CD4-positive, alpha-beta T cell (primary cell): ENCODE measurements at regions of chr1 and their contacts with region 1.

Region 1: DNA sequence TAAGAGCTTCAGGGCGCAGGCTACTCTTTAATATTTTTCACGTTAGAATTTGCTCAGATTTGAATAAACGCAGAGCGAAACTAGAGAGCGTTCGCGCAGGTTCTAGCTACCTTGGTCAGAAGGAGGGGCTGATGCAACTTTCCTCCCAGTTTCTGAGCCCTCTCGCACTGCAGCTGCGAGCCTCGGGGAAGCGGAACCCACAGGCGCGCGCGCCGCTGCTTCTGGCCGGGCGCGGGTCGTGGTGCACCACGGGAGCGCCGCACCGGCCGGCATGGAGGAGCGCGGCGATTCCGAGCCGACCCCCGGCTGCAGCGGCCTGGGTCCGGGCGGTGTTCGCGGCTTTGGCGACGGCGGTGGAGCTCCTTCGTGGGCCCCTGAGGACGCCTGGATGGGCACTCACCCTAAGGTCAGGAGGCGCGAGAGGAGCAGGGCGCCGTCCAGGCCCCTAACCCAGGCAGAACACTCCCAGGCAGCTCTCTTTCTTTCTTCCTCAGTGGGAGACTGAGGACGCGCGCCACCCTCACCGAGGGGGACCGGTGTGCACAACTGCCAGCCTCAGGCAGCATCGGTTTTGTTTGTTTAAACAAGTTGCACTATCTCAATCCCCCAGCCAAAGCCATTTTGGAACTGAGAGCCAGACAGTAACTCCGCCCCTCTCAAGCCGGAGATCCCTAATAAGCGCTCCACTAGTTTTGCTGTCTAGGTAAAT is at the start of gene TSEN15:
- DNase-seq: peak; percentile 50 to 87 (median 70)
- ATAC-seq: peak; percentile 96
- H3K4me3 ChIP-seq: peak within 1 kb of the TSS; percentile 87
- H3K4me3 Mint-ChIP-seq: peak within 1 kb of the TSS; percentile 98
- H3K27ac ChIP-seq: peak within 1 kb of the TSS; percentile 33 to 80
- H3K27ac Mint-ChIP-seq: peak within 1 kb of the TSS; percentile 92
- H3K4me1 ChIP-seq: peaks cover 15% of the 10 kb centered on the region
- H3K4me1 Mint-ChIP-seq: peaks cover 43% of the 10 kb centered on the region
- H3K27me3 ChIP-seq: no peaks in the 10 kb centered on the region
- H3K27me3 Mint-ChIP-seq: peaks cover 15% of the 10 kb centered on the region
- CTCF ChIP-seq: no peak
- total RNA-seq, gene TSEN15: 11.2 to 12.2 TPM

Region 2: GRCh38 chr1:183956559-183957188 is 95.0 kb before region 1 on chr1:
- CTCF ChIA-PET with region 1: no interaction called
- POLR2A ChIA-PET with region 1: interaction called, 24 read pairs
- intact Hi-C with region 1: loop called (anchors 2 to 5 kb)
- DNase-seq: peak in 13 of 14 experiments; percentile 9 to 91 (median 36)
- ATAC-seq: peak; percentile 100
- H3K4me3 ChIP-seq: no peak overlapping the region
- H3K4me3 Mint-ChIP-seq: peak overlapping the region; percentile 7
- H3K27ac ChIP-seq: peak overlapping the region; percentile 60 to 74
- H3K27ac Mint-ChIP-seq: no peak overlapping the region
- H3K4me1 ChIP-seq: peaks cover 20% of the 10 kb centered on the region
- H3K4me1 Mint-ChIP-seq: peaks cover 6% of the 10 kb centered on the region
- H3K27me3 ChIP-seq: no peaks in the 10 kb centered on the region
- H3K27me3 Mint-ChIP-seq: no peaks in the 10 kb centered on the region
- CTCF ChIP-seq: peak; percentile 39

Region 3: DNA sequence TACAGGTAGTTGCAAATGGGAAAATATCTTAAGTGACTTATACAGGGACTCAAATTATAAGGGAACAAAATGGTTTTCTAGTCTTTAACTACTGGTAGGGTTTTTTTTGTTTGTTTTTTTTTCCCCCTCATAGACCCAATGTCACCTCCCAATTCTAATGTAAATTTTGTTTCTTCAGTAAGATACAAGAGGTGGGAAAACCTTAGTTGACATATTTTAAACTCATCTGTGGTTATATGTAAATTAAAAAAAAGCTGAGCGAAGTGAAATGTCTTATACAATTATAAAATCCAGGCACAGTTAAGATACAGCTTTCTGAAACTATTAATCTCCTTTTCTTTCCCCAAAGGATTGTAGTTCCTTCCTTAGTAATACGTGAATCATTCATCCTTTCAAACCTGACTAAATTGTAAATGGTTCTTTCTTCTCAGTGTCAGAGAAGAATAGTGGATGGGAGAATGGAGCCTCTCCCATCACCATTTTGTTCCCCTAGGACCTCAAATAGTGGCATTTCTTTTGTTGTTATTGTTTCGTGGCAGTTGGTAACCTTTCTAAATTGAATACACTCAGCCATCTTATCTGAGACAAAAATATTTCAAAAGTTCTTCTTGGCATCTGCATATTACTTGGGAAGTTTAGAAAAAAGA is 11.1 kb after region 1 on chr1:
- CTCF ChIA-PET with region 1: interaction called, 3 read pairs
- POLR2A ChIA-PET with region 1: interaction called, 11 read pairs
- intact Hi-C with region 1: no loop called
- DNase-seq: no peak
- ATAC-seq: no peak
- H3K4me3 ChIP-seq: no peak overlapping the region
- H3K4me3 Mint-ChIP-seq: no peak overlapping the region
- H3K27ac ChIP-seq: no peak overlapping the region
- H3K27ac Mint-ChIP-seq: no peak overlapping the region
- H3K4me1 ChIP-seq: no peaks in the 10 kb centered on the region
- H3K4me1 Mint-ChIP-seq: peaks cover 28% of the 10 kb centered on the region
- H3K27me3 ChIP-seq: no peaks in the 10 kb centered on the region
- H3K27me3 Mint-ChIP-seq: no peaks in the 10 kb centered on the region
- CTCF ChIP-seq: no peak